Activated CD4-positive, alpha-beta T cell treated with anti-CD3 and anti-CD28 coated beads for 36 hours (primary cell): ENCODE measurements at regions of chr17 and their contacts with region 1.

Region 1: GRCh38 chr17:82917691-82918345 is 78.0 kb upstream of the ZNF750 start:
- DNase-seq: peak; percentile 65
- ATAC-seq: peak; percentile 44
- H3K4me3 Mint-ChIP-seq: no peak overlapping the region
- H3K27ac Mint-ChIP-seq: no peak overlapping the region
- H3K4me1 Mint-ChIP-seq: peaks cover 10% of the 10 kb centered on the region
- H3K27me3 Mint-ChIP-seq: no peaks in the 10 kb centered on the region

Region 2: DNA sequence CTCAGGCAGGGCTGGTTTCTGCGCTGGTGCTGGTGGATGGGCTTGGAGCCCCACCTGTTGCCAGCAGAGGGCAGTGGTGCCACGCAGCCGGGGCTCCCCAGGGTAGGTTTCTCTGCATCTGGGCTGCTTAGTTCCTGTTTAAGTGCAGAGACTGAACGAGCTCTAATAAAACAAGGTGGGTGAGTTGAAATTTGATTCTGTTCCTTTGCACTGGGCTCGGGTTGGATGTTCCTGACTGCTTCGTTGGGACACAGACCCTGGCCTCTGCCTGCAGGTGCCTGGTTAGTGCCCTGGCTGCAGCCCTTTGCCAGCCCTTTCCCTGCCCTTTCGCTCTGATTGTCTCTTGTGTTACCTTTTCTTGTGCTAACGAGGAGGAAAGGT is 135.9 kb before region 1 on chr17:
- CTCF ChIA-PET with region 1: interaction called, 8 read pairs
- POLR2A ChIA-PET with region 1: no interaction called
- intact Hi-C with region 1: loop called (anchors 1 to 2 kb)
- DNase-seq: peak; percentile 91
- ATAC-seq: peak; percentile 99
- H3K4me3 Mint-ChIP-seq: no peak overlapping the region
- H3K27ac Mint-ChIP-seq: no peak overlapping the region
- H3K4me1 Mint-ChIP-seq: peaks cover 3% of the 10 kb centered on the region
- H3K27me3 Mint-ChIP-seq: no peaks in the 10 kb centered on the region